Breast epithelium (tissue), 4 donors: ENCODE measurements at regions of chr10 and their contacts with region 1.

Region 1: DNA sequence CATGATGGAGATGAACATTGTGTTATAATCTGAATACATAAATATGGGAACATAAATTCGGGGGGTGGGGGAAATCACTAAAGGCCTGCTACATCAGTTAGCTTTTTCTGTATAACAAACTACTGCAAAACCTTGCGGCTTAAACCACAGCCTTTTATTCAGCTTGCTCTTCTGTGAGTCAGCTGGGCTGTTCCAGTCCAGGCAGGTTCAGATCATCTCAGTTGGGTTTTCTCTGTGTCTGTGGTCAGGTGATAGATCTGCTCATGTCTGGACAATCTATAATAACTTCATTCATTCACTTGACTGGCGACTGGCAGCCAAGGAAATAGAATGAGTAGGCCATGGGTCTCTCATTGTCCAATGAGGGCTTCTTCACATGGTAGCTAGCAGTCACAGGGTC is 23.5 kb downstream of the HTR7 start:
- DNase-seq: no peak
- H3K4me3 ChIP-seq: no peak overlapping the region
- H3K27ac ChIP-seq: no peak overlapping the region
- H3K4me1 ChIP-seq: no peaks in the 10 kb centered on the region
- H3K27me3 ChIP-seq: no peaks in the 10 kb centered on the region
- CTCF ChIP-seq: no peak
- POLR2A ChIP-seq: no peak

Region 2: DNA sequence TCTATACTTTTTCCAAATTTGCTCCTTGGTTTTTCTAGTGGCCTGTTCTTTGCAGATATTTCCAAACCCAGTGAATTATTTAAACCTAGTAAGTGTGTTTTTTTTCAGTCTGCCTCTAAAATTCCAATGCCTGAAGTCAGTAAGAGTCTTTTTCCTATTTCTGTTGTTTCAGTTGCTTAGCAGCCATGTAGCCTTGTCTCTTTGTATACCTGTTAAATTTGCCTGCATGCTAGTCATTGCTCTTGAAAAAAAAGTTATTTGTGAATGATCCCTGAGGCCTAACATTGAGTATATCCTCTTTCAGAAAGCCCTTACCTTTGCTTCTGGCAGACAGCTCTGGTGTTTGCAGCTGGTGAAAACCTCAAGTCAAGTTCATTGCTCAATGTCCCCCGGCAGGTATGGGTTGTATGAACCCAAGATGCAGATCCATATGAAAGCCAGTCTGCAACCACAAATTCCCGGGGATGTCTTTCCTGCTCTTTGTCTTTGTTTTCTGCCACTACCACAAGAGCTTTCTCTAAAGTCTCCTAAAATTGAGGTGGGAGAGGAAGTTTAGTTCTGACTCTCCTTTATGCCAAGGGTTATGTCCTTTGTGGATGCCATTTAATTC is 1663.0 kb before region 1 on chr10:
- intact Hi-C with region 1: loop called (anchors 10 kb)
- DNase-seq: no peak
- H3K4me3 ChIP-seq: no peak overlapping the region
- H3K27ac ChIP-seq: no peak overlapping the region
- H3K4me1 ChIP-seq: no peaks in the 10 kb centered on the region
- H3K27me3 ChIP-seq: no peaks in the 10 kb centered on the region
- CTCF ChIP-seq: no peak
- POLR2A ChIP-seq: no peak

Region 3: GRCh38 chr10:90847417-90847816 is 13.1 kb after region 1 on chr10:
- intact Hi-C with region 1: no loop called
- DNase-seq: peak in 1 of 2 donors; percentile 47
- H3K4me3 ChIP-seq: no peak overlapping the region
- H3K27ac ChIP-seq: no peak overlapping the region
- H3K4me1 ChIP-seq: no peaks in the 10 kb centered on the region
- H3K27me3 ChIP-seq: no peaks in the 10 kb centered on the region
- CTCF ChIP-seq: no peak
- POLR2A ChIP-seq: no peak